Prostate gland (tissue), 2 donors: ENCODE measurements at regions of chr13 and their contacts with region 1.

Region 1: DNA sequence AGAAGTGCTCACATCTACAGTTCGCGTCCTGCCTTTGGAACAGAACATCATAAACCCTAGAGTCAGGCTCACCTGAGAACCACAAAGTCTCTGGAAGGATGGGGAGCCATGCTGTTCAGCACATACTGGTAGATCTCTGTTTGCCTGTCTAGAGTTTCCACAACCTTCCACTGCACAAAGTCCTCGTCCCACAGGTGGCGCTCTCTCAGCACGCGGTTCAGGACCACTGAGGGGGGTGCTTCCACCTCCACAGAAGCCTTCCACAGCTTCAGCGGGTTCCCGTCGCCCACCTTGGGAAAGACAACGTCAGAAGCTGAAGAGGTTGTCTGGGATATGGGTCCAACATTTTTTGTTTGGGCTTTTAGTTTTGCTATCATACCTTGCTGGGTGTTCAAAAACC is 93.6 kb downstream of the KL start:
- DNase-seq: no peak
- H3K4me3 ChIP-seq: no peak overlapping the region
- H3K27ac ChIP-seq: peak overlapping the region in 1 of 2 donors; percentile 65
- H3K4me1 ChIP-seq: peaks cover 25% of the 10 kb centered on the region
- H3K27me3 ChIP-seq: no peaks in the 10 kb centered on the region
- CTCF ChIP-seq: no peak
- POLR2A ChIP-seq: no peak

Region 2: GRCh38 chr13:33040090-33040489 is 69.7 kb before region 1 on chr13:
- intact Hi-C with region 1: loop called (anchors 10 kb)
- DNase-seq: no peak
- H3K4me3 ChIP-seq: no peak overlapping the region
- H3K27ac ChIP-seq: peak overlapping the region; percentile 21 to 46
- H3K4me1 ChIP-seq: no peaks in the 10 kb centered on the region
- H3K27me3 ChIP-seq: no peaks in the 10 kb centered on the region
- CTCF ChIP-seq: no peak
- POLR2A ChIP-seq: no peak

Region 3: DNA sequence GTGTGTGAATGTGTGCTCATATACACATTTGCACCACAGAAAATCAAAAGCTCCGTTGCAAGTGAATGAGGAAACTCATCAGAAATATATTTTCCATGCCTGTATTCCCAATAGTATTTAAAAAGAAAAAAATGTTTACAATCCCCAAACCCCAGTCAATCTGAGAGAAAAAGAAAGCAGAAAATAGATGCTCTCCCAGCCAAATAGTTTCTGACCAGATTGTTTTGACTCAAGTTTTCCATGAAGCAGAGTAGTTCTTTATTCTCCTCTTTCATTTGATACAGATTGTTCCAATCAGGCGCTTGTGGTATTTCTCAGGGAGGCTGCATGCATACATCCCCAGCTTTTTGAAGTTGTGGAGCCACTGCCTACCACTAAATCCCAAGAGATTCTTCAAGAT is 65.1 kb after region 1 on chr13:
- intact Hi-C with region 1: loop called (anchors 5 kb)
- DNase-seq: no peak
- H3K4me3 ChIP-seq: no peak overlapping the region
- H3K27ac ChIP-seq: no peak overlapping the region
- H3K4me1 ChIP-seq: no peaks in the 10 kb centered on the region
- H3K27me3 ChIP-seq: no peaks in the 10 kb centered on the region
- CTCF ChIP-seq: no peak
- POLR2A ChIP-seq: no peak